ENCODE measurements at regions of chr4 and their contacts with region 1.

Region 1: DNA sequence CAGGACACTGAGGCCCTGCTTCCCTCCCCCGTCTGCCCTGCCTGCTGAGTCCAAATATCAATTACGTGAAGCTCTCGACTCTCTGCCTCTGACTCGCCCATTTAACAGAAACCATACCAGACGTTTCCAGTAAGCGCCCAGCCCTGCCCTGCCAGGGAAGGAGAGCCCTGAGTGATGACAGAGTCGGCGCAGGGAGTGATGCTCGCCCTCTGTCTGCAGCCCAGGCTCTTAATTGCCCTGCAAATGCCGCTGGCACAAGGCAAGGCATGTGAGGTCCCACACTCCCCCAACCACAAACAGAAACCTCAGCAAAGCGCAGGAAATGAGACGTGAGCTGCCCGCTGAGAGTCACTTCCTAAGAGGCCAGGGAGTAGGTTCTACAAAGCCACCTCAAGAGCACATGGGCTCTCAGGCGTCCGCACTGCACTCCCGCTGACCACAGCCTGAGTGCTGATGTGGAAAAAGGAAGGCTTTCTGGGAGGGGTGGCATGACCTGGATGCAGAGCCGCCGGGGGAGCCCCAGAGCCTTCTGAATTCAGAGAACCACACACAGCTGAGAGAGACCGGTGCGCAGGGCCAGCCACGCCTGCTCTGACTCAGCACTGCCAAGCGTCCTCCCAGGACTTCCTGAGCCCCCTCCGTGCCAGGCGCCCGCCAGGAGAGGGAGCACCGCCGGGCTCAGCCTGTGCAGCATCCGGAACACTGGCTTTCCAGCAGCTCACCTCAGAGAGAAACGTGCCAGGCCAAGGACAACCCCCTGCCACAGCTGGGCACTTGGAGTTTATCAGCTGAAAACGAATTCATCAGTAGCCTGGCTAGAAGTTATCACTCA is 5.3 kb downstream of the ZFYVE28 start:
- DNase-seq: peak; percentile 41
- H3K4me3 ChIP-seq: peak overlapping the region; percentile 48
- CTCF ChIP-seq: peak; percentile 83

Region 2: GRCh38 chr4:2402029-2402428 is 11.1 kb before region 1 on chr4:
- CTCF ChIA-PET with region 1: interaction called, 18 read pairs
- POLR2A ChIA-PET with region 1: interaction called, 6 read pairs
- DNase-seq: no peak
- H3K4me3 ChIP-seq: peak overlapping the region; percentile 45
- CTCF ChIP-seq: no peak